AG04449 (cell line): ENCODE measurements at regions of chr18 and their contacts with region 1.

Region 1: GRCh38 chr18:267688-268552 is at the start of gene THOC1:
- DNase-seq: peak; percentile 54
- H3K4me3 ChIP-seq: peak within 1 kb of the TSS; percentile 87
- CTCF ChIP-seq: no peak

Region 2: DNA sequence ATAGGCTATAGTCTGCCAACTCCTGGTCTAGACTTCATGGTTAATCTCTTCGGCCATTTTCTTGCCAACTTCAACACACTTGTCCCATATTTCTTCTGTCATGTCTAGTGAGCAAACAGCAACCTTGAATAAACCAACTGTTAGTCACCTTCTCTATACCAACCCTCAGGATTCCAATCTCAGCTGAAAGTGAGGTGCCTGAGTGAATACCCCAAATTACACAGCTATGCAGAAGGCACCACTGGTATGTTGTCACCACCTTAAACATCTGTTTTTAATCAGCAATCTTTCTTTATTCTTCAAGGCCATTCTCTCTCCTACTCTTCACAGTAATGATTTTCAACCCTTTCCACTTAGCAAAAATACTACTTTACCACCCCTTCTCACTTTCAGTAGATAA is 39.3 kb before region 1 on chr18:
- CTCF ChIA-PET with region 1: no interaction called
- POLR2A ChIA-PET with region 1: no interaction called
- DNase-seq: peak; percentile 7
- H3K4me3 ChIP-seq: no peak overlapping the region
- CTCF ChIP-seq: no peak

Region 3: GRCh38 chr18:616380-616995 is 348.6 kb after region 1 on chr18:
- CTCF ChIA-PET with region 1: interaction called, 10 read pairs
- POLR2A ChIA-PET with region 1: no interaction called
- DNase-seq: no peak
- H3K4me3 ChIP-seq: no peak overlapping the region
- CTCF ChIP-seq: peak; percentile 49